ENCODE measurements at regions of chr19 and their contacts with region 1.

Region 1: GRCh38 chr19:7394731-7395359 is 46.1 kb downstream of the ARHGEF18 start:
- DNase-seq: peak; percentile 48 to 93
- H3K4me3 ChIP-seq: peak overlapping the region; percentile 77 to 89
- H3K27ac ChIP-seq: peak overlapping the region; percentile 42 to 73
- H3K4me1 ChIP-seq: peaks cover 0 to 14% of the 10 kb centered on the region in 2 donors
- H3K27me3 ChIP-seq: no peaks in the 10 kb centered on the region
- CTCF ChIP-seq: no peak

Region 2: GRCh38 chr19:7083076-7083956 is 311.5 kb before region 1 on chr19:
- intact Hi-C with region 1: no loop called
- DNase-seq: no peak
- H3K4me3 ChIP-seq: peak overlapping the region in 1 of 2 donors; percentile 12
- H3K27ac ChIP-seq: no peak overlapping the region
- H3K4me1 ChIP-seq: no peaks in the 10 kb centered on the region
- H3K27me3 ChIP-seq: no peaks in the 10 kb centered on the region
- CTCF ChIP-seq: no peak

Region 3: DNA sequence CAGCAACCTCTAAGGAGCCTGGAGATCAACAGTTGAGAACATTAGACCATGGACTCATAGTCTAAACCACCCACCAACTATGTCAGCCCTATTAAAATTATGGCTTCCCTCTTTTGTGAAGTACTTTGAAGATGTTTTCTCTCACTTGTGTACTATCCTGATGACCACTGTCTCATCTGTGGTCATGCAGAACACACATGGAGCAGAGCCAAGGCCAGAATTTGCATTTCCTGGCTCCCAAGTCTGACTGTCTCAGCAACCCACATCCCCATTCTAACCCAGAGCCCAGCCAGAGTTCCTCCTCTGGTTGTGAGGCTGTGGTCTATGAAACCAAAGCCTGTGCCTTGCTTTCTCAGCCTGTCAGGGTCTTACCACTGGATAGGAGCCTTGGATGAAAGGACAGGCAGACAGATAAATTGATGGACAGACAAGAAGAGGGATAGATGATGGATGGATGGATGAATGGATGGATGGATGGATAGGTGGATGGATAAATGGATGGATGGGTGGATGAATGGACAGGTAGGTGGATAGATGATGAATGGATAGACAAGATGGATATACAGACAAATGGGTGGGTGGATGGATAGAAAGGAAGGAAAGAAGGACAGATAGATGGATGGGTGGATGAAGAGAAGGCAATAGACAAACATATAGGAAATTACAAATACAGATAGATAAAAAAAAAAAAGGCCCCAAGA is 289.9 kb before region 1 on chr19:
- intact Hi-C with region 1: loop called (anchors 5 kb)
- DNase-seq: no peak
- H3K4me3 ChIP-seq: no peak overlapping the region
- H3K27ac ChIP-seq: no peak overlapping the region
- H3K4me1 ChIP-seq: no peaks in the 10 kb centered on the region
- H3K27me3 ChIP-seq: no peaks in the 10 kb centered on the region
- CTCF ChIP-seq: no peak

Region 4: GRCh38 chr19:8592231-8593009 is 1197.6 kb after region 1 on chr19:
- intact Hi-C with region 1: loop called (anchors 10 kb)
- DNase-seq: peak; percentile 95 to 99
- H3K4me3 ChIP-seq: peak overlapping the region; percentile 23 to 61
- H3K27ac ChIP-seq: peak overlapping the region; percentile 40 to 63
- H3K4me1 ChIP-seq: peaks cover 10 to 18% of the 10 kb centered on the region in 2 donors
- H3K27me3 ChIP-seq: no peaks in the 10 kb centered on the region
- CTCF ChIP-seq: no peak